Activated T-helper 2 cell treated with anti-CD3 and anti-CD28 coated beads, Interferon-gamma antibody, Interleukin-2, Interleukin-4, amounts not matched to agents 10 μg/mL and 5 μg/mL and 100 μg/mL, durations not matched to agents 14 hours and 24 hours and 36 hours (primary cell): ENCODE measurements at regions of chr2 and their contacts with region 1.

Region 1: GRCh38 chr2:190088917-190089316 is 26.4 kb upstream of the MSTN start:
- DNase-seq: no peak
- H3K4me3 Mint-ChIP-seq: no peak overlapping the region
- H3K27ac Mint-ChIP-seq: no peak overlapping the region
- H3K4me1 Mint-ChIP-seq: no peaks in the 10 kb centered on the region
- H3K27me3 Mint-ChIP-seq: peaks cover 3% of the 10 kb centered on the region

Region 2: DNA sequence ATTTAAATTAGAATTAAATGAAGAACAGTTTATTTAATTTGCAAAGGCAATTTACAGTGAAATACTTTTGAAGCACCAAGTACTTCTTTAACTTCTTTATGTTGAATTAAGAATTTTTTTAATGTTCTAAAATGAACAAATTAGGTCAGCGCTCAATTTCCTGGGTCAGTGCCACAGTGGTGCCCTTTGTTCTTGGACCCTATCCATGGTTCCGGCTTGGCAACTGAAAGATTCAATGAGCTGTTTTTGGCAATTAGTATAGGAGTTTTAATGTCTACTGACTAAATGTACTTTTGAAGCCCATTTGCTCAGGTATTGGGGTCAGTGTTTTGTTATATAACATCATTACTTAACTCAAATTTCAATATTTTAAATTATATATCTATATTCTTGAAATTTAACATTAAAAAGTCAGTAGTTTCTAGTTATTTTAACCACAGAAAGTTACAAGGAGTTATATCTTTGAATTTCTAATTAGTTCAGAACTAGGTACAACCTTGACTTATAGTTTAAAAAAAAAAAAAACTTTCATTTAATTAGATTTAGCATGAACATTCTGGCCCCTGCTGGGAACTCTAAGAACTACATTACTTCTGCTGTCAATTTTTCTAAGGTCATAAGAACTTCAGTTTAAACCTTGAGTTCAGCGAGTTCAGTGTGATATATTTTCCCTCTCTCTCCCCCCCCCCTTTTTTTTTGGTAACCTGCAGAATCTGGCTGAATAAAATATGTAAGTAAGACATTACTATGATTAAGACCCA is 18.8 kb before region 1 on chr2:
- intact Hi-C with region 1: no loop called
- DNase-seq: no peak
- H3K4me3 Mint-ChIP-seq: no peak overlapping the region
- H3K27ac Mint-ChIP-seq: no peak overlapping the region
- H3K4me1 Mint-ChIP-seq: peaks cover 2% of the 10 kb centered on the region
- H3K27me3 Mint-ChIP-seq: peaks cover 10% of the 10 kb centered on the region

Region 3: DNA sequence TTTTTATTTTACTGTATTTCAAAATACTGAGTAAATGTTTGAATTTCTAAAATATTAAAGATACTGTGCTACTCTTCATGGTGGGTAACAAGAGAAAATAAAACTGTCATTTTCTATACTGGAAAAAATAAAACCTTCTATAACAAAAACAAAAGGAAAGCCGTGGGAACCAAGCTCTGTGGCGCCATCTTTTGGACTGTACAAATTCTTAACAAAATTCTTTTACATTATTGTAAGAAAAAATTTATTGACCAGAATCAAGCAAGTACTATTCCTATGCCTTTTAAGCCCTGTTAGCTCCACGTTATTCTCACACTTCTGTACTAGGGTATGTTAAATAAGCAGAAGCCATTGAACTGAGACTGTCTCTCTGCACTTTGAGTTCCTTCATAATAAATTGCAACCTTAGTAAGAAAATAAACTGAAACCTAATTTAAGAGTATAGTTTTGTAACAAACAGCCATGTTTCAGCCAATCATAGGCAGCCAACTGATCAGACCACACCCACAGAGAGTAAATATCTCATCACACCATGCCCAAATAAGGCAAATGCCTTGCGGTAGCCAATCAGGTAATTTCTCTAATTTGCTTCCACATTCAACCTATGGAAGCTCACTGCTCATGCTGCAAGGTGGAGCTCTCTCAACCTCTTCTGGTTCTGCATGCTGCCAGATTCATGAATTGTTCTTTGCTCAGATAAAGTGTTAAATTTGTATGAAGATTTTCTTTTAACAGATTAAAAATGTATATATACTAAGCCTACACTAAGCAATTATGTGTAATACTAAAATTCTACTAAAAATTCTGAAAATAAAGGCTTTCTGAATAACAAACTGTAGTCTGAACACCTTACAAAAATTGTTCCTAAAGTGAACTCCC is 188.6 kb after region 1 on chr2:
- intact Hi-C with region 1: loop called (anchors 1 kb)
- DNase-seq: no peak
- H3K4me3 Mint-ChIP-seq: no peak overlapping the region
- H3K27ac Mint-ChIP-seq: no peak overlapping the region
- H3K4me1 Mint-ChIP-seq: peaks cover 7% of the 10 kb centered on the region
- H3K27me3 Mint-ChIP-seq: no peaks in the 10 kb centered on the region

Region 4: DNA sequence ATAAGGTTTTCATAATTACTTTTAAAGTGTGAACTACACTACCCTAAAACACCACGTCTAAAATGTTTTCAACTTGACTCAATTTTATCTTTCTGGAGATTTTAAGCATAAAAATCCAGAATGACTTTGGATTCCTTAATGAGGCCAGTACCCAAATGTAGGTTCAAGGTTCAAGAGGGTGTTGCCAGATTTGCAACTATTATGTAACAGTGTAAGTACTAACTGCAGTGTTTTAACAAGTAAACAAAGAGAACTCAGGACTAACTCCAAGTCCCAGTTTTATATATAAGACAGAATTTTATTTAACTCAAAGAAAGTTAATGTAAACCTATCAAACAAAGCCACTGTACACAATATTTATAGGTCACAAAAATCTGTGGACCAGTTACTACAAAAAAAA is 225.0 kb after region 1 on chr2:
- intact Hi-C with region 1: loop called (anchors 2 kb)
- DNase-seq: no peak
- H3K4me3 Mint-ChIP-seq: no peak overlapping the region
- H3K27ac Mint-ChIP-seq: no peak overlapping the region
- H3K4me1 Mint-ChIP-seq: peaks cover 29% of the 10 kb centered on the region
- H3K27me3 Mint-ChIP-seq: no peaks in the 10 kb centered on the region

Region 5: GRCh38 chr2:190376591-190377245 is 287.8 kb after region 1 on chr2:
- intact Hi-C with region 1: loop called (anchors 1 kb)
- DNase-seq: no peak
- H3K4me3 Mint-ChIP-seq: no peak overlapping the region
- H3K27ac Mint-ChIP-seq: no peak overlapping the region
- H3K4me1 Mint-ChIP-seq: no peaks in the 10 kb centered on the region
- H3K27me3 Mint-ChIP-seq: peaks cover 3% of the 10 kb centered on the region

Region 6: GRCh38 chr2:190804182-190804795 is 715.4 kb after region 1 on chr2:
- intact Hi-C with region 1: loop called (anchors 2 kb)
- DNase-seq: no peak
- H3K4me3 Mint-ChIP-seq: no peak overlapping the region
- H3K27ac Mint-ChIP-seq: no peak overlapping the region
- H3K4me1 Mint-ChIP-seq: peaks cover 25% of the 10 kb centered on the region
- H3K27me3 Mint-ChIP-seq: no peaks in the 10 kb centered on the region